Right lobe of liver (tissue), 6 donors: ENCODE measurements at regions of chr16 and their contacts with region 1.

Region 1: DNA sequence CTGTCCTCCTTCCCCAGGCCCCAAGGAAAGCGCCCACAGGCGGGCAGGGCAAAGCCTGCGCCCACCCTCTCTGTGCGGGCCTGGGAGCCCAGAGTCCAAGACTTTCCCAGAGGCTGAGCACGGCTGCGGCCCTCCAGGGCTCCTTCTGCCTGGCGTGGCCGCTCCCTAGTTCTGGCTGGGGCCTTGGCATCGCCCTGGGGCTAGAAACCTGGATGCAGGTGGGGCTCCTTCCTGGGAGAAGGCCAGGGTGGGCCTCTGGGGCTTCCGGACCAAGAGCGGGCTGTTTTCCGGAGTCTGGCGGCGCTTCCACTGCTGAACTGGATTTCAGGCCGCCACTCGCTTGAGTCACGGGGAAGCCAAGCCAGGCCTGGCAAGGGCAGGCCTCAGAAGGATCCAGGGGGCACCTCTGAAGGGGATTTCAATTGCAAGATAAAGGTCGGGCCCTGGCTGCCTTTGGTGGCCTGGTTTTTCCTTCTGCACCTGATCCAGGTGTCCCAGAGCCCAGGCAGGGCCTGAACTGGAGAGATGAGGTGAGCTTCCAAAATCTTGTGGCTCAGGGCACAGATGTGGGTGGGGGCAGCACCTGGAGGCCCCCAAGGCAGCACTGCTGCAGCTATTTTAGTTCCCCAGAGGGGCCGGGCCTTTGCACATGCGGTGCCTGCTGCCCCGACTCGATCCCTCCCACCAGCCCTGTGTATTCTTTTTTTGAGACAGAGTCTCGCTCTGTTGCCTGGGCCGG is 227.4 kb downstream of the MRTFB start:
- DNase-seq: no peak
- ATAC-seq: no peak
- H3K4me3 ChIP-seq: no peak overlapping the region
- H3K27ac ChIP-seq: no peak overlapping the region
- H3K4me1 ChIP-seq: no peaks in the 10 kb centered on the region
- H3K27me3 ChIP-seq: no peaks in the 10 kb centered on the region
- CTCF ChIP-seq: no peak
- POLR2A ChIP-seq: no peak

Region 2: DNA sequence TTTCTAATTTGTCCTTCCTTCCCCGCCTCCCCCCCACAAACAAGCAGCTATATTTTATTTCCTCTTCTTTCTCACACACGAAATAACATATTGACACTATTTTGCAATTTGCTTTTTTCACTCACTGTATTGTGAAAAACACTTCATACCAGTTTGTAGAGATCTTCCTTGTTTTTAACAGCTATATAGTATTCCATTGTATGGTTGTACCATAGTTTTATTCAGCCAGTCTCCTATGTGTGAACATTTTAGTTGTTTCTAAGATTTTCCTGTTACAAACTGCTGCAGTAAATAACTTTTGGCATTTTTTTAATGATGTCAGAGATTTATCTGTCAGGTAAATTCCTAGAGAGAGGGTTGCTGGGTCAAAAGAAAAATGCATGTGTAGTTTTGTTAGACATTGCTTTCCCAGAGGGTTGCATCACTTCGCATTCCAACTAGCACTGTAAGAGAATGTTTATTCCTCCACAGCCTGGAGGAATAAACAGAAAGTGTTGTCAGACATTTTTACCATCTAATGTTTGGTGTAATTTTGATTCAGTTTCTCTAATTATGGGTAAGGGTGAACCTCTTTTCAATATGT is 126.3 kb before region 1 on chr16:
- intact Hi-C with region 1: no loop called
- DNase-seq: no peak
- ATAC-seq: peak in 2 of 4 donors; percentile 23 to 65
- H3K4me3 ChIP-seq: no peak overlapping the region
- H3K27ac ChIP-seq: no peak overlapping the region
- H3K4me1 ChIP-seq: no peaks in the 10 kb centered on the region
- H3K27me3 ChIP-seq: no peaks in the 10 kb centered on the region
- CTCF ChIP-seq: no peak
- POLR2A ChIP-seq: no peak

Region 3: DNA sequence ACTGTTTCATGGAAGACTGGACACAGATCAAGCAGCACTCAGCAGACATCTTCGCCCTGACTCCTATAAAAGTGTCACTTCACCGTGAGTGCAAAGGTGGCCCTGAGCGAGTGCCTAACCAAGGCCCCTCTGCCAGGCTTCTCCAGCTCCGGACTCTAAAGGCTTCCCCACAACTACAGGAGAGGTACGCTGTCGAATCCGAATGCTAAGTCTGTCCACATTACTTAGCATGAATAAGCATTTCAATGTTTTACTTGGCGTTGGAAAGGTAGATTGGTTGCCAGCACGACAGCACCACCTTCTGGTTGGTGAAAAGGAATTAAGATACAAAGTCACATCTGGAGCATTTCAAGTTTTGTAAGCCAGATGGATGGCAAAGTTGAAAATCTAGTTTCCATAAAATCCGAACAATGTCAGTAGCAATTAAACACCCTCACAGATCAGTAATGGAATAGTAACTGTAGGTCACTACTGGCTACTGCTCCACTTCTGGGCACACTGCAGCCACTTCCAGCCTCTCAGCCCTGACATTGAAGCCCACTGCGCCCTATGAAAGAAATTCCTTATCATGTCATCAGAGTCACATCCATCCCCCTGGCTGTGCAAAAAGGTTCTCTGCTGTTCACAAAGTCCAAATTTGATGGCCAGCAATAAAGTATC is 230.6 kb after region 1 on chr16:
- intact Hi-C with region 1: loop called (anchors 5 kb)
- DNase-seq: peak; percentile 60 to 83 (median 71)
- ATAC-seq: peak; percentile 87 to 88 (median 88)
- H3K4me3 ChIP-seq: peak overlapping the region in 1 of 3 donors; percentile 31
- H3K27ac ChIP-seq: peak overlapping the region; percentile 52 to 71 (median 65)
- H3K4me1 ChIP-seq: peaks cover 0 to 25% (median 10%) of the 10 kb centered on the region in 4 donors
- H3K27me3 ChIP-seq: no peaks in the 10 kb centered on the region
- CTCF ChIP-seq: peak; percentile 72 to 92 (median 73)
- POLR2A ChIP-seq: no peak

Region 4: GRCh38 chr16:14534546-14534945 is 236.0 kb after region 1 on chr16:
- intact Hi-C with region 1: loop called (anchors 5 kb)
- DNase-seq: no peak
- ATAC-seq: no peak
- H3K4me3 ChIP-seq: no peak overlapping the region
- H3K27ac ChIP-seq: no peak overlapping the region
- H3K4me1 ChIP-seq: no peaks in the 10 kb centered on the region
- H3K27me3 ChIP-seq: no peaks in the 10 kb centered on the region
- CTCF ChIP-seq: no peak
- POLR2A ChIP-seq: no peak